Mammary epithelial cell (primary cell): ENCODE measurements at regions of chr7 and their contacts with region 1.

Region 1: DNA sequence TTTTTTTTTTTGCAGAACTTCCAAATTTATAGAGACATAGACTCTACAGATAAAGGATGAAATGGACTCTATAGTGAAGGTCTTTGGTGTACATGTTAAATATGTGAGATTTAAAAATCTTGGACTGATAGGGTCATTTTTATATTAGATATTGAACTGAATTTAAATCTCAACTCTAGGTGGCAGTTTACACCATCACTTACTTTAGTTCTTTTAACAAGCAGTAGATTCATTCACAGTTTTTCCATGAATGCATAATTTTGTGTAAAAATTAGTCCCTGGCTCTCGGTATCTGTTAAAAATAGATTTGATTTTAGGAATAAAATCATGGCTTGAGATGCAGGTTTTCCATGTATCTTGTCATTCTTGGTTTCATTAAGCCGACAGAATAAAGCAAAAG is 31.1 kb upstream of the SNX13 start:
- DNase-seq: no peak
- H3K4me3 ChIP-seq: no peak overlapping the region
- H3K27ac ChIP-seq: no peak overlapping the region
- H3K4me1 ChIP-seq: no peaks in the 10 kb centered on the region
- H3K27me3 ChIP-seq: no peaks in the 10 kb centered on the region
- CTCF ChIP-seq: peak in 1 of 2 donors; percentile 17

Region 2: DNA sequence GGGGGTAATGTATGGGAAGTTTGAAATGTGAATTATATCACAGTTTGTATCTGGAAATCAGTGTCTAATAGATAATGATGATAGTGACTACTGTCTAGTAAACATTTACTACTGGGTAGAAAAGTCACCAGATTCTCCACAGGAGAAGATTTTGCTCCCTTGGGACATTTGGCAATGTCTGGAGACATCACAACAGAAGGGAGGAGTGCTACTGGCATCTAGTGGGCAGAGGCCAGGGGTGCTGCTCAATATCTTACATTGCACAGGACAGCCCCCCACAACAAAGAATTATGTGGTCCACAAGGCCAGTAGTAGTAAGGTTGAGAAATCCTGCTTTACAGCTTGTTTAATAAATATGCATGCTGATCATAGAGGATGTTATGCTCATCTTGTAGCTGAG is 148.6 kb after region 1 on chr7:
- CTCF ChIA-PET with region 1: no interaction called
- dilution Hi-C with region 1: no loop called
- in situ Hi-C with region 1: no loop called
- intact Hi-C with region 1: loop called (anchors 10 kb)
- DNase-seq: no peak
- H3K4me3 ChIP-seq: no peak overlapping the region
- H3K27ac ChIP-seq: no peak overlapping the region
- H3K4me1 ChIP-seq: no peaks in the 10 kb centered on the region
- H3K27me3 ChIP-seq: no peaks in the 10 kb centered on the region
- CTCF ChIP-seq: peak; percentile 21 to 44